ENCODE measurements at regions of chr10 and their contacts with region 1.

Region 1: DNA sequence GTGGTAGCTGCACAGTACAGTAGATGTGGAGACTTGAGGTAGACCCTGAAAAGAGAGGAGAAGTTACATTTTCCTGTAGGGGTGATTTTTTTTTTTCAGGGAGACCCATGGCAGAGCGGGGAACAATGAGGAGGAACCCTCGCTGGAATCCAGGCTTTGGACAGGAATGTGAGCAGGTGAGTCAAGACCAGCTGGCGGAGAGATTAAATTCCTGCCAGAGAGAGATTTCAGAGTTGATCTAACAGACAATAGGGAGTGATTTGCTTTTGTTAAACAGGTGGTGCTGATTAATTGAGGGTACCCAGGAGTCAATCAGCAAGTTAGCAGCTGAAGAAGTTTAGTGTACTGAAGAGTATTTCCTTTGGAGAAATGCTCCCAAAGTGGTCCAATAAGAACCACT is 41.6 kb upstream of the MINDY3 start:
- DNase-seq: no peak
- H3K4me3 Mint-ChIP-seq: no peak overlapping the region
- H3K27ac Mint-ChIP-seq: no peak overlapping the region
- H3K4me1 Mint-ChIP-seq: no peaks in the 10 kb centered on the region
- H3K27me3 Mint-ChIP-seq: peaks cover 4% of the 10 kb centered on the region

Region 2: GRCh38 chr10:15842556-15843169 is 59.2 kb before region 1 on chr10:
- intact Hi-C with region 1: no loop called
- DNase-seq: no peak
- H3K4me3 Mint-ChIP-seq: no peak overlapping the region
- H3K27ac Mint-ChIP-seq: no peak overlapping the region
- H3K4me1 Mint-ChIP-seq: peaks cover 24% of the 10 kb centered on the region
- H3K27me3 Mint-ChIP-seq: no peaks in the 10 kb centered on the region

Region 3: GRCh38 chr10:16545116-16545736 is 643.3 kb after region 1 on chr10:
- intact Hi-C with region 1: loop called (anchors 5 kb)
- DNase-seq: no peak
- H3K4me3 Mint-ChIP-seq: no peak overlapping the region
- H3K27ac Mint-ChIP-seq: no peak overlapping the region
- H3K4me1 Mint-ChIP-seq: no peaks in the 10 kb centered on the region
- H3K27me3 Mint-ChIP-seq: no peaks in the 10 kb centered on the region

Region 4: DNA sequence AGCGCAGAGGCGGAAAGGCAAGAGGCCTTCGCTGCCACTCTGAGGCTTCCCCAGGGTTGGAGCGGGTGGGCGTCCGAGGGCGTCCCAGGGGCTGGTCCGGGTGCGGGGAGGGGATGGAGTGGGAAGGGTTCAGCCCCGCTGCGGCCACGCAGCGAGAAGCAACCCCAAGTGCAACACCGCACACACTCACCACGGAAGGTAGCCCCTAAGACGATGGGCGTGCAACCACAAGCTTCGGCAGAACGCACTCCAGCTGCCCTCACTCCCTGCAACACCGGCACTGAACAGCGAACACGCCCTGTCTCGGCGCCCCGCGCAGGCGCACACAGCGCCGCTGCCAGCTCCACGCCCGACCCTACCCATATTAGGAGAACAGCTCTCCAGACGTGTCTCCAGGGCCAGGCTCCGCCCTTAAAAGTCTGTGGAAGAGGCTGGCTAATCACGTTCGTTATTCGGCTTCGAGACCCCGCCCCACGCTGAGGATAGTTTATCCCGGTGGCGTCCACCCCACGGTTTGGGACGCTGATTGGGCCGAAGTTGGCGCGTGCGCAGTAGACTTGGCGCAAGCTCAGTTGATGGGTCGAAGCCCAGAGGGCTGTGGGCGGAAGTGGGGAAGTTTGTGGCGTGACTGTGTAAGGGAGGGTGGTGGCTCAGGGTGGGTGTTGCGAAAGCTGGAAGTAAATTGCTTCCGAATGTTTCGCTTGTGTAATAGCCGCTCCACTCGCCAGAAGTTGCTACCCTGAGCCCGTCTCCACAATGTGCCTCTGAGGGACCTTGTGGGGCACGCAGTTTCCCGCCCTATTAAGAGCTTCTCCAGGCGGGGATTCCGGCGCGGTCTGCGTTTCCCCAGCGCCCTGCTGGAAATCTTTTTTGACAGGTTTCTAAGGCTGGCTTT is 915.5 kb after region 1 on chr10 and contains the start of gene RSU1:
- intact Hi-C with region 1: loop called (anchors 5 kb)
- DNase-seq: peak; percentile 100
- H3K4me3 Mint-ChIP-seq: peak within 1 kb of the TSS; percentile 93
- H3K27ac Mint-ChIP-seq: peak within 1 kb of the TSS; percentile 79
- H3K4me1 Mint-ChIP-seq: peaks cover 27% of the 10 kb centered on the region
- H3K27me3 Mint-ChIP-seq: peaks cover 10% of the 10 kb centered on the region
- total RNA-seq, gene RSU1: 49.1 and 54.0 TPM in 2 replicates